GM13977 (cell line): ENCODE measurements at regions of chr14 and their contacts with region 1.

Region 1: DNA sequence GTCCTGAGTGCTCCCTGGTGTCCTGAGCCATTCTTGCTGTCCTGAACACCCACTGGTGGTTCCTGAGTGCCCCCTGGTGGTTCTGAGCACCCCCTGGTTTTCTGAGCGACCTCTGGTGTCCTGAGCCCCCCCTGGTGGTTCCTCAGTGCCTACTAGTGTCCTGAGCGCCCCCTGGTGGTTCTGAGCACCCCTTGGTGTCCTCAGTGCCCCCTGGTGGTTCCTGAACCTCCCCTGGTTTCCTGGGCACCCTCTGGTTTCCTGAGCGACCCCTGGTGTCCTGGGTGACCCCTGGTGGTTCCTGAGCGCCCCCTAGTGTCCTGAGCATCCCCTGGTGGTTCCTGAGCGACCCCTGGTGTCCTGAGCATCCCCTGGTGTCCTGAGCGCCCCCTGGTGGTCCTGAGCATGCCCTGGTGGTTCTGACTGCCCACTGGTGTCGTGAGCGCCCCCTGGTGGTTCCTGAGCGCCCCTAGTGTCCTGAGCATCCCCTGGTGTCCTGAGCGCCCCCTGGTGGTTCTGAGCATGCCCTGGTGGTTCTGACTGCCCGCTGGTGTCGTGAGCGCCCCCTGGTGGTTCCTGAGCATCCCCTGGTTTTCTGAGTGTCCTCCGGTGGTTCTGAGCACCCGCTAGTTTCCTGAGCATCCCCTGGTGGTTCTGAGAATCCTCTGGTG is 473.1 kb downstream of the TMEM121 start:
- DNase-seq: peak; percentile 56
- CTCF ChIP-seq: peak; percentile 97

Region 2: GRCh38 chr14:105666420-105666819 is 333.1 kb before region 1 on chr14:
- in situ Hi-C with region 1: loop called (anchors 10 kb)
- DNase-seq: no peak
- CTCF ChIP-seq: no peak

Region 3: DNA sequence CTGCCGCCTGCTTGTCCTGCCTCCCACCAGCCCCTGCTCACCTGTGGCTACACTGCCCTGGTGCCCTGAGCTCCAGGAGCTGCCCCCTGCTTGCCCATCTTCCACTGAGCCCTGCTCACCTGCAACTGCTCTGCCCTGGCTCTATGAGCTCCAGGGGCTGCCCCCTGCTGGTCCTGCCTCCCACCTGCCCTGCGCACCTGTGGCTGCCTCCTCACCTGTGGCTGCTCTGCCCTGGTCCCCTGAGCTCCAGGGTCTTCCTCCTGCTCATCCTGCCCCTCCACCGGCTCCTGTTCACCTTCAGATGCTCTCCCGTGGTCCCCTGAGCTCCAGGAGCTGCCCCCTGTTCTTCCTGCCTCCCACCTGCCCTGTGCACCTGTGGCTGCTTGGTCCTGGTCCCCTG is 225.5 kb before region 1 on chr14:
- in situ Hi-C with region 1: no loop called
- DNase-seq: no peak
- CTCF ChIP-seq: no peak